AG04450 (cell line): ENCODE measurements at regions of chr9 and their contacts with region 1.

Region 1: DNA sequence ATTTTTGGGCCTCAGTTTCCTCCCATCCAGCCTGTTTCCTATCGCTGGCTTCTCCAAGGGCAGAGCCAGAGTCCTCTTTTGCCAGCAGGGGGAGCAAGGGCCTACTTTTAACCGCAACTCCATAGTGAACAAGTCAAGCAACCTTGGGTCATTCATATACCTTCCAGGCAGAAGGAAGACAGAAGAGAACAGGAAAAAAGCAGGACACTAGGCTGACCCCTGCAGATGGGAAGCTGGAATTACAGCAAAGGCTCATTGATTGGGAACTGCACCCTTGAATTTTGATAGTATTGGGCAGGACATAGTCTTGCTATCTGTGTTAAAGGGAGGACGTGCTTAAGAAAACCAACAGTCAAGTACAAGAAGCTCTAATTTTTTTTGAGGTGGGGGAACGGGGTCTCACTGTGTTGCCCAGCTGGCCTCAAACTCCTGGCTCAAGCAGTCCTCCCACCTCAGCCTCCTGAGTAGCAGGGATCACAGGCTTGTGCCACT is 30.1 kb downstream of the QRFP start:
- DNase-seq: peak; percentile 68
- H3K4me3 ChIP-seq: peak overlapping the region; percentile 34
- H3K27ac ChIP-seq: no peak overlapping the region
- H3K27me3 ChIP-seq: no peaks in the 10 kb centered on the region
- CTCF ChIP-seq: peak; percentile 97

Region 2: DNA sequence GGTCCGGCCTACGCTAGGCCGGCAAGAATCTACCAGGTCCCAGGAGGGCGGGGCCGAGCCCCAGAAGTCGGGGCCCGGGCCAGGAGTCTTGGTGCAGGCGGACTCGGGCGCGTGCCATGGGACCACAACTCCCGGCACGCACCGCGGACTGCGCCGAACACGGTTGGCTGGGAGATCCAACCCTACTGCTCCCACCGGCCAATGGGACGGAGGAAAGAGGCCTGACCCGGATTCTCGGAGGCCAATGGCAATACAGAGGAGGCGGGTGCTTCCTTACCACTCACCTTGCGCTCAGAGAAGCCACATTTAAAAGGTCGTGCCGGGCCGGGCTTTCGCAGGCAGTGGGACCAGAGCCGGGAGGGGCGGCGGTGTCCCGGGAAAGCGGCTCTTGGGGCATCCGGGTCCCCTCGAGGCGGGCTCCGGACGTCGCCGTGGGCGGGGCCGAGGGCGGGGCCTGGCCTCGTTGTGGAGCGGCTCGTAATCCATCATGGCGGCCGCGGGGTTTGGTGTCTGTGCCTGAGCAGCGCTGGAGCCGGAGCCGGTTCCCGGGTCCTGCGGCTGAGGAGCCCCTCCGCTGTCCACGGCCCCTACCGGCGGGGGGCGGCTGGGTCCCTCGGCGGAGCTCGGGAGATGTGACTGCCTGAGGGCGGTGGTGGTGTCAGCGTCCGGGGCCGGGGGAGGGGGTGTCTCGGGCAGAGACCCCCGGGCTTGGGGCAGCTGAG is 153.8 kb before region 1 on chr9:
- CTCF ChIA-PET with region 1: interaction called, 390 read pairs
- POLR2A ChIA-PET with region 1: interaction called, 3 read pairs
- DNase-seq: peak; percentile 97
- H3K4me3 ChIP-seq: peak overlapping the region; percentile 78
- H3K27ac ChIP-seq: peak overlapping the region; percentile 96
- H3K27me3 ChIP-seq: no peaks in the 10 kb centered on the region
- CTCF ChIP-seq: no peak

Region 3: GRCh38 chr9:130770679-130771442 is 95.7 kb before region 1 on chr9:
- CTCF ChIA-PET with region 1: interaction called, 121 read pairs
- POLR2A ChIA-PET with region 1: interaction called, 3 read pairs
- DNase-seq: peak; percentile 44
- H3K4me3 ChIP-seq: no peak overlapping the region
- H3K27ac ChIP-seq: no peak overlapping the region
- H3K27me3 ChIP-seq: no peaks in the 10 kb centered on the region
- CTCF ChIP-seq: peak; percentile 71

Region 4: GRCh38 chr9:130846487-130847326 is 19.8 kb before region 1 on chr9:
- CTCF ChIA-PET with region 1: interaction called, 38 read pairs
- POLR2A ChIA-PET with region 1: no interaction called
- DNase-seq: no peak
- H3K4me3 ChIP-seq: peak overlapping the region; percentile 46
- H3K27ac ChIP-seq: peak overlapping the region; percentile 98
- H3K27me3 ChIP-seq: no peaks in the 10 kb centered on the region
- CTCF ChIP-seq: no peak

Region 5: GRCh38 chr9:130932255-130933079 is 65.9 kb after region 1 on chr9:
- CTCF ChIA-PET with region 1: interaction called, 13 read pairs
- POLR2A ChIA-PET with region 1: no interaction called
- DNase-seq: no peak
- H3K4me3 ChIP-seq: peak overlapping the region; percentile 29
- H3K27ac ChIP-seq: peak overlapping the region; percentile 87
- H3K27me3 ChIP-seq: no peaks in the 10 kb centered on the region
- CTCF ChIP-seq: peak; percentile 28

Region 6: DNA sequence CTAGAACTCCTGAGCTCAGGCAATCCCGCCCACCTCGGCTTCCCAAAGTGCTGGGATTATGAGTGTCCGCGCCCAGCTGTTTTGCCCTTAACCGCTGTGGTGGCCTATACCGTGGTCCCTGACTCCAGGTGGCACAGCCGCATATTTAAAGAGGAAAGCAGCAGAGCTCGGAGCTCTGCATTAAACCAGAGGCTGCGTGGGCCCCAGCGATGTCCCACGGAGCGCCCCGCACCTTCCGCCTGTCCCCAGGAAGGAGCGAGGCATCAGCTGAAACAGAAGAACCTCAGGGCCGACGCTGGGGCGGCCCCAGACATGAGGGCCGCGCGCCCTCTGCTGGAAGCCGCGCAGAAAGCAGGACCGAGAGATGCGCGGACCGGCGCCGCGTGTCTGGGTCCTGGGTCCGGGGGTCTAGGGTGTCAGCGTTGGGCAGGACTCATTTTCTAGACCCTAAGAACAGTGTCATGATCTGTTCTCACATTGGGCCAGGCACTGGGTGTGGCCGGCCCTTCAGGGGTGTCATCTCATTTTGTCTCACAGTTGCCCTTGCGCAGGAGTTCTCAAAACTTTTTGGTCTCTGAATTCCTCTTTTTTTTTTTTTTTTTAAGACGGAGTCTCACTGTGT is 180.2 kb after region 1 on chr9:
- CTCF ChIA-PET with region 1: interaction called, 39 read pairs
- POLR2A ChIA-PET with region 1: no interaction called
- DNase-seq: peak; percentile 13
- H3K4me3 ChIP-seq: no peak overlapping the region
- H3K27ac ChIP-seq: no peak overlapping the region
- H3K27me3 ChIP-seq: peaks cover 14% of the 10 kb centered on the region
- CTCF ChIP-seq: peak; percentile 95